Right lobe of liver (tissue), 6 donors: ENCODE measurements at regions of chr4 and their contacts with region 1.

Region 1: GRCh38 chr4:154566639-154567204 is 3.9 kb downstream of the FGB start:
- DNase-seq: no peak
- ATAC-seq: no peak
- H3K4me3 ChIP-seq: peak overlapping the region in 2 of 3 donors; percentile 48 to 56
- H3K27ac ChIP-seq: peak overlapping the region; percentile 2 to 91 (median 23)
- H3K4me1 ChIP-seq: peaks cover 0 to 35% (median 1%) of the 10 kb centered on the region in 4 donors
- H3K27me3 ChIP-seq: no peaks in the 10 kb centered on the region
- CTCF ChIP-seq: no peak
- POLR2A ChIP-seq: peak; percentile 32

Region 2: DNA sequence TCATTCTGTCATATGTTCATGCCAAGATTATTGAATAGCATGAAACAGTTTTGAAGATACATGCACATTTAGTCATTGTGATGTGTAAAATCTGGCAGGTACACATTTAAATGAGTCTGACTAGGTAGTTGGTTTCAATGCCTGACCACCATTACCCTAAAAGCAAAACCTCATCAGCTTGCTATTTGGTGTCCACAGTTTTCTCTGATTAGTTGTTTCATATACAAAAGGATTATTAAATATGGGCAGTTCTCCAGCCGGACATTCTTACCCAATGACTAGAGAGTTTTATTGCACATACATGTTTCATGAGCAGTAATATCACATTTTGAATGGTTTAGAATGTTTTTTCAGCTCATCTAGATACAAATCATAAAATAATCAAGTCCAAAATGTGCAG is 98.8 kb before region 1 on chr4:
- intact Hi-C with region 1: no loop called
- DNase-seq: no peak
- ATAC-seq: no peak
- H3K4me3 ChIP-seq: no peak overlapping the region
- H3K27ac ChIP-seq: no peak overlapping the region
- H3K4me1 ChIP-seq: peaks cover 0 to 6% (median 0%) of the 10 kb centered on the region in 4 donors
- H3K27me3 ChIP-seq: no peaks in the 10 kb centered on the region
- CTCF ChIP-seq: no peak
- POLR2A ChIP-seq: no peak

Region 3: GRCh38 chr4:154612472-154613414 is 46.0 kb after region 1 on chr4 and contains the start of gene FGG:
- intact Hi-C with region 1: loop called (anchors 5 kb)
- DNase-seq: peak; percentile 77 to 93 (median 90)
- ATAC-seq: peak; percentile 48 to 91 (median 72)
- H3K4me3 ChIP-seq: peak within 1 kb of the TSS; percentile 28 to 67 (median 66)
- H3K27ac ChIP-seq: peak within 1 kb of the TSS; percentile 62 to 94 (median 71)
- H3K4me1 ChIP-seq: peaks cover 0 to 40% (median 15%) of the 10 kb centered on the region in 4 donors
- H3K27me3 ChIP-seq: no peaks in the 10 kb centered on the region
- CTCF ChIP-seq: no peak
- POLR2A ChIP-seq: peak; percentile 98
- total RNA-seq, gene FGG: 5,578 to 14,578 (median 13,052) TPM